Lower leg skin (tissue), 4 donors: ENCODE measurements at regions of chr10 and their contacts with region 1.

Region 1: GRCh38 chr10:91632671-91633550 is at the start of gene PPP1R3C:
- DNase-seq: peak; percentile 83 to 97
- H3K4me3 ChIP-seq: peak within 1 kb of the TSS; percentile 37
- CTCF ChIP-seq: no peak
- POLR2A ChIP-seq: peak in 1 of 2 donors; percentile 53
- total RNA-seq, gene PPP1R3C: 5.3 to 30.2 (median 10.3) TPM

Region 2: DNA sequence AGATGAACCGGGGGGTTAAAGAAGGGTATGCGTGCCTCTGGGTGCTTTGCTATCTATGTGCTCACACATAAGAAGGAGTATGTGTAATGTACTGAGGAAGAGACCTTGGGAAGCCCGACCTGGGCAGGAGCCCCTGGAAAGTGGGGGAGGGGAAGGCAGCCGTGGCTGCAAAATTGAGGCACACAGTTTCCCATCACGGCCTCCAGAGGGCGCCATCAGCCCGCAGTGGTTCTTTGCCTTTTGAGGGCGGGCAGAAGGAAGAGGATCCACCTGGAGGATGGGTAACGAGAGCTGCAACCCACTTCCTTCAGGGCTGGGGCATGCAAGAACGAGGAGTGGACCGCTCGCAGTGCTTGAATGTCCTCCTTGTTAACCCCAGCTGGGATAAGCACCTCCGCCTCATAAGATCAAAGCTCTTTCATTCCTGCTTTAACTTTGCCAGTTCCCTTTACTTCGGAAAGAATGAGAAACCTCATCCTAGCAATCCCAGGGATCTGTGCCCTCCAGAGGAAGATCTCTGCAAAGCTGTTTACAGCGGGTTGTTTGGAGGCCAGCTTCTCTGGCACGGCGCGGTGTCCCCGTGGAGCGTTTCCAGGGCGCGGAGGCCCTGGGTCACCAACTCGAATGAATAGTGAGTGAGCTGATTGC is 334.6 kb before region 1 on chr10:
- intact Hi-C with region 1: loop called (anchors 10 kb)
- DNase-seq: peak; percentile 64 to 92
- H3K4me3 ChIP-seq: peak overlapping the region; percentile 2
- CTCF ChIP-seq: peak in 1 of 3 donors; percentile 68
- POLR2A ChIP-seq: no peak

Region 3: GRCh38 chr10:91493313-91493712 is 139.6 kb before region 1 on chr10:
- intact Hi-C with region 1: loop called (anchors 2 kb)
- DNase-seq: no peak
- H3K4me3 ChIP-seq: no peak overlapping the region
- CTCF ChIP-seq: no peak
- POLR2A ChIP-seq: no peak

Region 4: DNA sequence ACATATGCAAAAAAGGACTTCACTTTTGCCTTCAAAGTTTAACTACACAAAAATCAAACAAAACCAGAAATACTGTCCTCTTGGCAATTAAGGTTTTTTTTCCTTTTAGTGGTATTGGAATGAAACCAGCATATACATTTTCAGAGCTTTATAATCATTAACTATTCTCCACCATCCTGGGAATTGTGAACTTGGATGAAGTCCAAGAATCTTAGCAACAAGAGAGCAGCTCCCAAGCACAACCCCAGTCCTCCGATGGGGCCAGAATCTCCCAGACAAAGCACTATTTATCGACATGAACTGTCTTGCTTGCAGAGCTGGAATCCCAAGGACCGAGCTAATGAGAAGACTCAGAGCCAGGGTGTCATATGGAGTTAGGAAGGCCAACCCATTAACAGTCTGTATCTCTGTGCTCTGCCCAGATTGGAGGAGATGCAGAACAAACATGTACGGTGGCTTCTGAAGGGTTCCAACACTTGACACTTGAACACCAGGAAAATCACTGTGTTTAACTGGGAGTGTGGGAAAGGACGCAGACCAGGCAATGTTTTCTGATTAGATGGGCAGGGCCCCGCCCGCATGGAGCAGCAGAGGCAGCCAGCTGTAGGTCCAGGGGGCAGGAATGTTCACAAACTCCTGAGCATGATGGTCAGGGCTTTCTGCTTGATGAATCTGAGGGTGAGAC is 35.6 kb before region 1 on chr10:
- intact Hi-C with region 1: no loop called
- DNase-seq: no peak
- H3K4me3 ChIP-seq: no peak overlapping the region
- CTCF ChIP-seq: no peak
- POLR2A ChIP-seq: no peak

Region 5: GRCh38 chr10:91768123-91768522 is 135.2 kb after region 1 on chr10:
- intact Hi-C with region 1: no loop called
- DNase-seq: no peak
- H3K4me3 ChIP-seq: no peak overlapping the region
- CTCF ChIP-seq: no peak
- POLR2A ChIP-seq: no peak